ENCODE measurements at regions of chr12 and their contacts with region 1.

Region 1: GRCh38 chr12:98998697-98999299 is 353.7 kb downstream of the APAF1 start:
- DNase-seq: peak; percentile 26
- H3K4me3 ChIP-seq: no peak overlapping the region
- H3K27ac ChIP-seq: no peak overlapping the region
- H3K4me1 ChIP-seq: no peaks in the 10 kb centered on the region
- H3K27me3 ChIP-seq: no peaks in the 10 kb centered on the region
- CTCF ChIP-seq: peak; percentile 58 to 75

Region 2: DNA sequence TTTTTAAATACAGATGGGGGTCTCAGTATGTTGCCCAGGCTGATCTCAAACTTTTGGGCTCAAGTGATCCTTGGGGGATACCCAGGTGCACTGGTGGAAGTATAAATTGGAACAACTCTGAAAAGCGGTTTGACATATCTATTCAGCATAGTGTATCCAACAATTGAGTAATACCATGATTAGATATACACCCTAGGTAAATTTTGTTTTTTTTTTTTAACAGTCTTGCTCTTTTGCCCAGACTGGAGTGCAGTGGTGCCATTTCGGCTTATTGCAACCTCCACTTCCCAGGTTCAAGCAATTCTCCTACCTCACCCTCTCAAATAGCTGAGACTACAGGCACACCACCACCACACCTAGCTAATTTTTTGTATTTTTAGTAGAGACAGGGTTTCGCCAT is 437.0 kb before region 1 on chr12:
- CTCF ChIA-PET with region 1: interaction called, 11 read pairs
- dilution Hi-C with region 1: no loop called
- in situ Hi-C with region 1: no loop called
- intact Hi-C with region 1: loop called (anchors 5 kb)
- DNase-seq: no peak
- H3K4me3 ChIP-seq: no peak overlapping the region
- H3K27ac ChIP-seq: no peak overlapping the region
- H3K4me1 ChIP-seq: no peaks in the 10 kb centered on the region
- H3K27me3 ChIP-seq: no peaks in the 10 kb centered on the region
- CTCF ChIP-seq: no peak

Region 3: GRCh38 chr12:98698603-98699463 is 300.0 kb before region 1 on chr12:
- CTCF ChIA-PET with region 1: no interaction called
- dilution Hi-C with region 1: no loop called
- in situ Hi-C with region 1: loop called in 1 of 2 experiments (anchors 25 kb)
- intact Hi-C with region 1: loop called (anchors 1 kb)
- DNase-seq: peak; percentile 44
- H3K4me3 ChIP-seq: no peak overlapping the region
- H3K27ac ChIP-seq: no peak overlapping the region
- H3K4me1 ChIP-seq: no peaks in the 10 kb centered on the region
- H3K27me3 ChIP-seq: no peaks in the 10 kb centered on the region
- CTCF ChIP-seq: peak; percentile 67 to 79

Region 4: GRCh38 chr12:98725476-98726247 is 273.1 kb before region 1 on chr12:
- CTCF ChIA-PET with region 1: no interaction called
- dilution Hi-C with region 1: no loop called
- in situ Hi-C with region 1: loop called in 1 of 2 experiments (anchors 25 kb)
- intact Hi-C with region 1: loop called (anchors 1 kb)
- DNase-seq: peak; percentile 41
- H3K4me3 ChIP-seq: no peak overlapping the region
- H3K27ac ChIP-seq: no peak overlapping the region
- H3K4me1 ChIP-seq: no peaks in the 10 kb centered on the region
- H3K27me3 ChIP-seq: no peaks in the 10 kb centered on the region
- CTCF ChIP-seq: peak; percentile 41 to 47